AG04449 (cell line): ENCODE measurements at regions of chr14 and their contacts with region 1.

Region 1: DNA sequence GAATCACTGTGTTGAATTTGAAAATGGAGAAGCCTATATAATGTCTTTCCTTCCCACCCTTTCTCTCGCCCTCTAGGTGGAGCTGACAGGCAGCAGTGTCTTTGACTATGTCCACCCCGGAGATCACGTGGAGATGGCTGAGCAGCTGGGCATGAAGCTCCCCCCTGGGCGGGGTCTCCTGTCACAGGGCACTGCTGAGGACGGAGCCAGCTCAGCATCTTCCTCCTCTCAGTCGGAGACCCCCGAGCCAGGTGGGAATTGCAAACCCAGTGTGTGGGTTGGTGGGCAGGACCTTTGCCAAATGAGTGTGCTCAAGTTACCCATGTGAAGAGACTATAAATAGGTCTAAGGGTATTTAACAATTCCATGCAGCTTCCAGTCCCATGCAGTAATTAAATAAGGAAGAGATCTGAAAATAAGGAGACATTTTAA is 274.7 kb downstream of the EGLN3 start:
- DNase-seq: no peak
- H3K4me3 ChIP-seq: no peak overlapping the region
- CTCF ChIP-seq: peak; percentile 58

Region 2: DNA sequence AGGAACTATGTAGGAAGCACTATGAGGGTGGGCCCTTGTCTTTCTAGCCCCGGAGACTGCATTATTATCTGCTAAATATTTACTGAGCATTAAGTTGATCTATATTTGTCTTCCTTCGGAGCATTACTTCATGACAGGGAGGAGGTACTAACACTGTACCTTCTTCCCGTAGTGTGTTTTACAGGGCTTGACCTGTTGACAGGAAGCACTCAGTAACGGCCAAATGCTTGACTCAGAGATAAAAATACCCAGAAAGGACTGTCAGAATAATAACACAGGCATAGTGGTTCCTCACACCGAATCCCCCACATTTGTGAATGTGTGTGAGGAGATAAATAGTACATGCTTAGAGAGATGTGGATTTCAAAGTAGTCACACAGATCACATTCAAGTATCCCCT is 191.9 kb before region 1 on chr14:
- CTCF ChIA-PET with region 1: no interaction called
- POLR2A ChIA-PET with region 1: no interaction called
- DNase-seq: no peak
- H3K4me3 ChIP-seq: no peak overlapping the region
- CTCF ChIP-seq: no peak

Region 3: DNA sequence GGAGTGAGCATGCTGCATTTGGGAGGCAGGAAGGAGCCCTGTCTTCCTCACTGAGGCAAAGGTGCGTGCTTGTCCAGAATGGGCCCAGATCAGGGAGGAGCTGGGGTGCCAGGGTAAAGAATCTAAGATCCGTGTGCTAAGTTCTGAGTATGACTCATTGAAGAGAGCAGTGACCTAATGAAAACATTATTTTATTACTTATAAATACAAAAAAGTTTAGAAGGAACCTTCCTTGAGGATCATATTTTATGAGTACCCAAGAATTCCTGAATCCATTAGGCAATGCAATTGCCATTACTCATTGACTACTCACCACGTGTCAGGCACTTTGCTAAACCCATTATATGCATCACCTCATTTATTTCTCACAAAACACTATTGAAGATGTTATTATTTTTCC is 10.1 kb after region 1 on chr14:
- CTCF ChIA-PET with region 1: interaction called, 13 read pairs
- POLR2A ChIA-PET with region 1: no interaction called
- DNase-seq: peak; percentile 59
- H3K4me3 ChIP-seq: no peak overlapping the region
- CTCF ChIP-seq: no peak

Region 4: GRCh38 chr14:33692762-33693161 is 16.6 kb after region 1 on chr14:
- CTCF ChIA-PET with region 1: interaction called, 13 read pairs
- POLR2A ChIA-PET with region 1: no interaction called
- DNase-seq: peak; percentile 76
- H3K4me3 ChIP-seq: no peak overlapping the region; the same call in 1 of the 2 replicates
- CTCF ChIP-seq: no peak